ENCODE measurements at regions of chr11 and their contacts with region 1.

Region 1: DNA sequence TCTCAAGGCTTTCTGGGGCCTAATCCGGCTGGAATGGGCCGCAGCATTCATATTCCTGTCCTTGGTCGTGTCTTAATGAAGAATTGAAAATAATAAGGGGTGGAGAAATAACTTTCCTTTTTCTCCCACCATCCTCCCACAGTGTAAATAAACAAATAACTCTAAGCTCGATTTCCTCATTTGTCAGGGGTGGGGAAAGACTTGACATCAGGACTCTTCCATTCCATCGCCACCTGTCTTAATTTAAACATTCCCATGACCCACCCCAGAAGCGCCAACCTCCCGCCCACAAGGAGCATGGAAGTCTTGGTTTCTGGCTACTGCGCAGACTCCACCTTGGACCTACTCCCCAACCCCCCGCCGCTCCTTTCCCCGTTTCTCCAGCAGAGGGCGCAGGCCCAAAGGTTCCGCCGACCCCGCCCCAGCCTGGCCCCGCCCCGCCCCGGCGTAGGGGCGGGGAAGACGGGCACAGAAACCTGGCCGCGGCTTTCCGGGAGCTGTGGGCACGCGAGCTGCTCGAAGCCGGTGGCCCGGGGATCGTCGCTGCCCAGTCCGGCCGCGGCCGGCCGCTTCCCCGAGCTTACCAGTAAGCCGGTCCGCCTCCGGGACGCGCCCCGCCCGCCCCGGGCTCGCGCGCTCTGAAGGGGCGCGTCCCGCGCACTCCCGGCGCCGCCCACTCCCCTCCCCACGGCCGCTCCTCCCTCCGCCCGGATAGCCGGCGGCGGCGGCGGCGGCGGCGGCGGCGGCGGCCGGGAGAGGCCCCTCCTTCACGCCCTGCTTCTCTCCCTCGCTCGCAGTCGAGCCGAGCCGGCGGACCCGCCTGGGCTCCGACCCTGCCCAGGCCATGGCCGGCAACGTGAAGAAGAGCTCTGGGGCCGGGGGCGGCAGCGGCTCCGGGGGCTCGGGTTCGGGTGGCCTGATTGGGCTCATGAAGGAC is at the start of gene CBL:
- DNase-seq: peak; percentile 98 to 99
- H3K4me3 ChIP-seq: peak within 1 kb of the TSS; percentile 88
- H3K4me3 Mint-ChIP-seq: peak within 1 kb of the TSS; percentile 92
- H3K27ac Mint-ChIP-seq: peak within 1 kb of the TSS; percentile 87
- H3K4me1 ChIP-seq: peaks cover 37% of the 10 kb centered on the region
- H3K4me1 Mint-ChIP-seq: peaks cover 32% of the 10 kb centered on the region
- H3K27me3 ChIP-seq: no peaks in the 10 kb centered on the region
- H3K27me3 Mint-ChIP-seq: no peaks in the 10 kb centered on the region
- CTCF ChIP-seq: peak; percentile 98 to 99
- total RNA-seq, gene CBL: 52.7 and 53.5 TPM in 2 replicates

Region 2: GRCh38 chr11:118851970-118852369 is 353.9 kb before region 1 on chr11:
- CTCF ChIA-PET with region 1: no interaction called
- POLR2A ChIA-PET with region 1: no interaction called
- intact Hi-C with region 1: no loop called
- DNase-seq: no peak
- H3K4me3 ChIP-seq: no peak overlapping the region
- H3K4me3 Mint-ChIP-seq: no peak overlapping the region
- H3K27ac Mint-ChIP-seq: no peak overlapping the region
- H3K4me1 ChIP-seq: no peaks in the 10 kb centered on the region; the same call in 1 of the 2 replicates
- H3K4me1 Mint-ChIP-seq: no peaks in the 10 kb centered on the region
- H3K27me3 ChIP-seq: no peaks in the 10 kb centered on the region
- H3K27me3 Mint-ChIP-seq: no peaks in the 10 kb centered on the region
- CTCF ChIP-seq: no peak

Region 3: DNA sequence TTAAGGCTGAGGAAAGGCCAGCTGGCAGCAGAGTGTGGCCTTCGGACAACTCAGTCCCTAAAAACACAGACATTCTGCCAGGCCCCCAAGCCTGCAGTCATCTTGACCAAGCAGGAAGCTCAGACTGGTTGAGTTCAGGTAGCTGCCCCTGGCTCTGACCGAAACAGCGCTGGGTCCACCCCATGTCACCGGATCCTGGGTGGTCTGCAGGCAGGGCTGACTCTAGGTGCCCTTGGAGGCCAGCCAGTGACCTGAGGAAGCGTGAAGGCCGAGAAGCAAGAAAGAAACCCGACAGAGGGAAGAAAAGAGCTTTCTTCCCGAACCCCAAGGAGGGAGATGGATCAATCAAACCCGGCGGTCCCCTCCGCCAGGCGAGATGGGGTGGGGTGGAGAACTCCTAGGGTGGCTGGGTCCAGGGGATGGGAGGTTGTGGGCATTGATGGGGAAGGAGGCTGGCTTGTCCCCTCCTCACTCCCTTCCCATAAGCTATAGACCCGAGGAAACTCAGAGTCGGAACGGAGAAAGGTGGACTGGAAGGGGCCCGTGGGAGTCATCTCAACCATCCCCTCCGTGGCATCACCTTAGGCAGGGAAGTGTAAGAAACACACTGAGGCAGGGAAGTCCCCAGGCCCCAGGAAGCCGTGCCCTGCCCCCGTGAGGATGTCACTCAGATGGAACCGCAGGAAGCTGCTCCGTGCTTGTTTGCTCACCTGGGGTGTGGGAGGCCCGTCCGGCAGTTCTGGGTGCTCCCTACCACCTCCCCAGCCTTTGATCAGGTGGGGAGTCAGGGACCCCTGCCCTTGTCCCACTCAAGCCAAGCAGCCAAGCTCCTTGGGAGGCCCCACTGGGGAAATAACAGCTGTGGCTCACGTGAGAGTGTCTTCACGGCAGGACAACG is 310.5 kb before region 1 on chr11:
- CTCF ChIA-PET with region 1: no interaction called
- POLR2A ChIA-PET with region 1: no interaction called
- intact Hi-C with region 1: no loop called
- DNase-seq: peak; percentile 62 to 67
- H3K4me3 ChIP-seq: no peak overlapping the region
- H3K4me3 Mint-ChIP-seq: peak overlapping the region; percentile 3
- H3K27ac Mint-ChIP-seq: peak overlapping the region; percentile 70
- H3K4me1 ChIP-seq: 0 out of 2 replicates have a peak, but pooled peaks cover 3% of the 10 kb centered on the region
- H3K4me1 Mint-ChIP-seq: peaks cover 17% of the 10 kb centered on the region
- H3K27me3 ChIP-seq: no peaks in the 10 kb centered on the region
- H3K27me3 Mint-ChIP-seq: no peaks in the 10 kb centered on the region
- CTCF ChIP-seq: no peak

Region 4: DNA sequence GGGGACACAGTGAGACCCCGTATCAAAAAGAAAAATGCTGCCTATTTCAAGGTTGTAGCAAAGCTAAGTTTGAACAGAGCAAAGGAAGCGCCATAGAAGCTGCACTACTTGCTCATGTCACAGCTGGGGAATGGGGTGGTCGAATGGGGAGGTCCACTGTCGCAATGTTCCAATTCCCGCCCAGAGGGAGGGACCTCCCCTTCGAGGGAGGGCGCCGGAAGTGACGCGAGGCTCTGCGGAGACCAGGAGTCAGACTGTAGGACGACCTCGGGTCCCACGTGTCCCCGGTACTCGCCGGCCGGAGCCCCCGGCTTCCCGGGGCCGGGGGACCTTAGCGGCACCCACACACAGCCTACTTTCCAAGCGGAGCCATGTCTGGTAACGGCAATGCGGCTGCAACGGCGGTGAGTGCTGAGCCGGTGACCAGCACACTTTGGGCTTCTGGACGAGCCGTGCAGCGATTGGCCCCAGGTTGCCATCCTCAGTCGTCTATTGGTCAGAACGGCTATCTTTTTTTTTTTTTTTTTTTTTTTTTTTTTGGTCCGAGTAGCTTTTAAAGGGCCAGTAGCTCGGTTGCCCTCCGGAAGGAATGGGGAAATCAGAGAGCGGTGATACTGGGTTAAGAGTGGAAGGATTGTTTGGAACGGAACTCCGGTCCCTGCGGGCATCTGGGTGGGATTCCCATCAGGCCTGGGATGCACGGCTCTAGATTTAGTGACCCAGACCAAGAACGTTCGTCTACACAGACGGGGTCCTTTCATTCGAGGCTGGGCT is 121.0 kb before region 1 on chr11 and contains the start of gene HMBS:
- CTCF ChIA-PET with region 1: interaction called, 7 read pairs
- POLR2A ChIA-PET with region 1: interaction called, 11 read pairs
- intact Hi-C with region 1: no loop called
- DNase-seq: peak; percentile 97 to 98
- H3K4me3 ChIP-seq: peak within 1 kb of the TSS; percentile 85
- H3K4me3 Mint-ChIP-seq: peak within 1 kb of the TSS; percentile 97
- H3K27ac Mint-ChIP-seq: peak within 1 kb of the TSS; percentile 98
- H3K4me1 ChIP-seq: peaks cover 11% of the 10 kb centered on the region
- H3K4me1 Mint-ChIP-seq: peaks cover 1% of the 10 kb centered on the region
- H3K27me3 ChIP-seq: no peaks in the 10 kb centered on the region
- H3K27me3 Mint-ChIP-seq: no peaks in the 10 kb centered on the region
- CTCF ChIP-seq: no peak
- total RNA-seq, gene HMBS: 94.9 and 95.7 TPM in 2 replicates

Region 5: GRCh38 chr11:119121008-119121810 is 84.6 kb before region 1 on chr11 and contains the start of gene HINFP:
- CTCF ChIA-PET with region 1: interaction called, 18 read pairs
- POLR2A ChIA-PET with region 1: interaction called, 8 read pairs
- intact Hi-C with region 1: no loop called
- DNase-seq: peak; percentile 100
- H3K4me3 ChIP-seq: peak within 1 kb of the TSS; percentile 84
- H3K4me3 Mint-ChIP-seq: peak within 1 kb of the TSS; percentile 88
- H3K27ac Mint-ChIP-seq: peak within 1 kb of the TSS; percentile 90
- H3K4me1 ChIP-seq: peaks cover 18% of the 10 kb centered on the region
- H3K4me1 Mint-ChIP-seq: peaks cover 18% of the 10 kb centered on the region
- H3K27me3 ChIP-seq: no peaks in the 10 kb centered on the region
- H3K27me3 Mint-ChIP-seq: no peaks in the 10 kb centered on the region
- CTCF ChIP-seq: no peak
- total RNA-seq, gene HINFP: 61.6 and 65.2 TPM in 2 replicates

Region 6: GRCh38 chr11:119284344-119285157 is 78.7 kb after region 1 on chr11:
- CTCF ChIA-PET with region 1: interaction called, 25 read pairs
- POLR2A ChIA-PET with region 1: interaction called, 7 read pairs
- intact Hi-C with region 1: loop called (anchors 1 kb)
- DNase-seq: peak in 1 of 2 experiments; percentile 63
- H3K4me3 ChIP-seq: no peak overlapping the region
- H3K4me3 Mint-ChIP-seq: no peak overlapping the region
- H3K27ac Mint-ChIP-seq: no peak overlapping the region
- H3K4me1 ChIP-seq: no peaks in the 10 kb centered on the region
- H3K4me1 Mint-ChIP-seq: no peaks in the 10 kb centered on the region
- H3K27me3 ChIP-seq: no peaks in the 10 kb centered on the region
- H3K27me3 Mint-ChIP-seq: no peaks in the 10 kb centered on the region
- CTCF ChIP-seq: peak; percentile 71 to 74

Region 7: DNA sequence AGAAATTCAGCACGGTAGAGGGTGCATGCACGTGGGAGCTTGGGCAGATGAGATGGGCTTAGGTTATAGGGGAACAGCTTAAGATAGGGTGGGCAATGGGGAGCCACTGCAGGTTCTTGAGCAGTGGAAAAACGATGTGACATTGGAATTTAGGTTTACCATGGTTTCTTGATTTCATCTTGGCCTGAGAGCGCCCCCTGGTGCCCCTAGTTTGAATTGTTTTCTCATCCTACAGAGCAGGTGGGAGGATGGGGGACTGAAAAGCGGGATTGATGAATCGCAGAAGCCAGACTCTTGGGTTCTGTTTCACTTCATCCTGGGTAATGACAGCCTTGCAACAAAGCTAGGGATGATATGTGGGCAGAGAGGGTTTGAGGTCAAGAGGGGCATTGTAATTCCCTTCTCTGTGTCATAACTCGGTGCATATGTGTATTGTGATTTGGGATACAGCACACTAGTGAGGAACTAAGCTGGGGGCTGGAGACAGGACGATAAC is 117.7 kb after region 1 on chr11:
- CTCF ChIA-PET with region 1: interaction called, 17 read pairs
- POLR2A ChIA-PET with region 1: no interaction called
- intact Hi-C with region 1: loop called (anchors 10 kb)
- DNase-seq: peak; percentile 82 to 89
- H3K4me3 ChIP-seq: no peak overlapping the region
- H3K4me3 Mint-ChIP-seq: no peak overlapping the region
- H3K27ac Mint-ChIP-seq: no peak overlapping the region
- H3K4me1 ChIP-seq: peaks cover 24% of the 10 kb centered on the region
- H3K4me1 Mint-ChIP-seq: no peaks in the 10 kb centered on the region
- H3K27me3 ChIP-seq: no peaks in the 10 kb centered on the region
- H3K27me3 Mint-ChIP-seq: no peaks in the 10 kb centered on the region
- CTCF ChIP-seq: peak; percentile 84 to 95

Region 8: GRCh38 chr11:119373921-119374631 is 168.2 kb after region 1 on chr11:
- CTCF ChIA-PET with region 1: interaction called, 9 read pairs
- POLR2A ChIA-PET with region 1: no interaction called
- intact Hi-C with region 1: loop called (anchors 1 kb)
- DNase-seq: peak; percentile 89 to 95
- H3K4me3 ChIP-seq: no peak overlapping the region
- H3K4me3 Mint-ChIP-seq: no peak overlapping the region
- H3K27ac Mint-ChIP-seq: no peak overlapping the region
- H3K4me1 ChIP-seq: peaks cover 32% of the 10 kb centered on the region
- H3K4me1 Mint-ChIP-seq: peaks cover 28% of the 10 kb centered on the region
- H3K27me3 ChIP-seq: no peaks in the 10 kb centered on the region
- H3K27me3 Mint-ChIP-seq: no peaks in the 10 kb centered on the region
- CTCF ChIP-seq: peak; percentile 98 to 99

Measured in Caco-2 (cell line).